ENCODE measurements at regions of chr6 and their contacts with region 1.

Region 1: DNA sequence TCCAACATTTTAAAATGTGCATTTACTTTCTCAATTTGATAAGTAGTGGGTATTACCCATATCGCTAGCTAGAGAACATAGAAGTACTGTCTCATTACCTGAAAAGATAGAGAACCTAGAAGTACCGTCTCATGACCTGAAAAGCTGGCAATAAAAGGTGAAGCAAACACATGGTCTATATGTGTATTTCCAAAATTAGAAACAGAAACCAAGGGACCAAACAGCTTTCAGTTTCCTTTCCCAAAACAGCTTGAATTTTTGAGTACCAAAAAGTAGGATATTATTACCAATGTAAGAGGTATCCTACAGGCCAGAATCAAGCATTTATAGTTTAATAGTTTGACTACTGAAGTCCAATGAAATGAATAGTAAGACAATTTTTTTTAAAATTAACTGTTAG is 77.2 kb downstream of the KIF13A start:
- DNase-seq: no peak

Region 2: DNA sequence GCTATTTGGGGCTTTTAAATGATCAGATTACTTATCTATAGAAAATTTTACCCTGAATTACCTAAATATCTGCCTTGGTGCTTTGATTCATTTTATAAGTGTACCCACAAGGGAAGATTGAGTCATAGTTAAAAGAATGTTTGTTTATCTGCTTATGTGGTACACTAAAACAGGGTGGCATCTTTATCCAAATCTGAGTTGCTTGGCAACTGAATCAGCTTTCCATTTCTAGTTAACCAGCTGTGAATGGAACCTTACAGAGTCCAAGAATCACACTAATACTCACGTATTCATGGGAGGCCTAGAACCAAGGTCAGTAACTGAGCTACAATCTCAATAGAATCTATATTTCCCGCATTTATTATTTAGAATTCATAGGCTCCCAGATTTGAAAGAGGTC is 560.8 kb before region 1 on chr6:
- intact Hi-C with region 1: loop called in 1 of 2 experiments (anchors 10 kb)
- DNase-seq: no peak

Region 3: DNA sequence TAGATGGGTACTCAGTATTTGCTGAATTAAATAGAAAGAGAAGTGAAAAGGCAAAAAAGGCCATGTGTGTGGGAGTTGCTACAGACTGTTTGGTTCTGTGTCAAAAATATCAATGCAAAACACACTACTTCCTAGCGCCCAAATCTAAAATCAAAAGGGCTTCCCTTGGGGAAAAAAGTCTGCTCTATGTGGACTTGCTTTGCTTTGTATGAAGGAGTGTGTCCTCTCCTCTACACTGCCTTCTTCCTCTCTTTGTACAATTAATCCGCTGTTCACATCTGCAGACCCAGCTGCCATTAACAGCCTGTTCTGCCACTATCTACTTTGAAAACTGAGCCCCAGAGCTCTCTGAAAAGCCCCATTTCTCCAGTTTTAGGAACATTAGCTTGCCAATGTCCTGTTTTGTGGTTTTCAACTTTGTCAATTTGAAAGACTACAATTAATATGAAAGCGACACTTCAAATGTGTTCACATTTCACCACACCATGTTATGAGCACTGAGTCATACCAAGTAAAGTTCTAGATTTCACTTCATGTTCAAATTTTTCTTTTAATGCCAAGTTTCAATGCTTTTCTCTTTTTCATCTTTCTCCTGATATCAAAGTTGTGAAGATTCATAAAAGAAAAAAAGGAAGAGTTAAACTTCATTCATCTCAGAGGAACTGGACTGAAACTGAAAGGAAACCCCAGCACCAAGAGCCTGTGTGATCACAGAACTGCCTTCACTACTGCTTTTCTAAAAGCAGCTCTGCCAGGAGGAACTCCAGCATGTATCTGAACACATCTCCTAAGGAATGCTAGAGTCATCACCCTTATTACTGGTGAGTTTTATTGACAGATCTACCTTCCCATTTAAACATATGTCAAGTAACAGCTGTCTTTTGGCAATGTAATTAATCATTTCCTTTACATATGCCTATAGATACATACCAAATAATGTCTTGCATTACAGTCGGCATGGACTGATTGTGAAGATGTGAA is 25.4 kb before region 1 on chr6:
- intact Hi-C with region 1: loop called in 1 of 2 experiments (anchors 1 kb)
- DNase-seq: no peak

Region 4: DNA sequence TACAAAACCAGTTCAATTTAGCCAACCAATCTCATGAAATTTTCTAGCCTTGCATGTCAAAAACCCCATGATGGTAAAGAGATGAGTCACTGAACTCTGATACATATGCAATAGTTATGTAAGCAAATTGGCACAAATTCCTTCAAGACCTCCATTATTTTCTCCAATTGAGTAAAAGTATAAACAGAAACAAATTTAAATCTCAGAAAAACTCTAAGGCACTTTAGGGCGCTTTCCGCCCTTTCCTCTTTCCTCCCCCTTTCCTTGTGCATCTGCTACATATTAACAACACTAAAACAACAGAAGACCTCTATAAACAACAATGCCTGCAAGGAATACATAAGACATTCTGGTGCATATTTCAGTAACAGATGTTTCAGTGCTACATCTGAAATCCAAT is 28.7 kb after region 1 on chr6:
- intact Hi-C with region 1: no loop called
- DNase-seq: no peak

Region 5: GRCh38 chr6:18101271-18101670 is 191.1 kb after region 1 on chr6:
- intact Hi-C with region 1: no loop called
- DNase-seq: no peak